MCF 10A (cell line): ENCODE measurements at regions of chr12 and their contacts with region 1.

Region 1: GRCh38 chr12:106302401-106303201 is at the start of gene TCP11L2:
- DNase-seq: peak; percentile 79
- H3K4me3 Mint-ChIP-seq: peak within 1 kb of the TSS; percentile 89
- H3K27ac Mint-ChIP-seq: peak within 1 kb of the TSS; percentile 100
- H3K4me1 Mint-ChIP-seq: peaks cover 23% of the 10 kb centered on the region
- H3K27me3 Mint-ChIP-seq: no peaks in the 10 kb centered on the region
- CTCF ChIP-seq: no peak
- total RNA-seq, gene TCP11L2: 10.2 and 11.4 TPM in 2 replicates

Region 2: DNA sequence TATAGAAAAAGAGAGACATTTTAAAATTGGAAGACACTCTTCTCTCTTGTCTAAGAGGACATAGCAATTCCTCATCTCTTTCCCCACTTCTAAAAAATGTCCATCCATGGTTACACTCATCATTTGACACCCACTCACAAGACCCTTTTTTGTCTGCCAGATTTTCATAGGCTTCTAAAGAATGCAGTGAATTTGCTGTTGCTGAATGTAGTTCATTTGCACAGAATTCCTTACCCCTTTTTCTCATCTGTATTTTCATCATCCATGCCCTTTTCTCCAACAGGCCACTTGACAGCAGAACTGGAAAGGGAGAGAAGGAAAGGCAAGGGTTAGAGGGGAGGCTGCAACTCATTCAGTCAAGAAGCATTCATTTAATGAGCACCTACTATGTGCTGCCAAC is 291.9 kb before region 1 on chr12:
- CTCF ChIA-PET with region 1: no interaction called
- POLR2A ChIA-PET with region 1: no interaction called
- intact Hi-C with region 1: no loop called
- DNase-seq: no peak
- H3K4me3 Mint-ChIP-seq: no peak overlapping the region
- H3K27ac Mint-ChIP-seq: no peak overlapping the region
- H3K4me1 Mint-ChIP-seq: no peaks in the 10 kb centered on the region
- H3K27me3 Mint-ChIP-seq: no peaks in the 10 kb centered on the region
- CTCF ChIP-seq: no peak

Region 3: DNA sequence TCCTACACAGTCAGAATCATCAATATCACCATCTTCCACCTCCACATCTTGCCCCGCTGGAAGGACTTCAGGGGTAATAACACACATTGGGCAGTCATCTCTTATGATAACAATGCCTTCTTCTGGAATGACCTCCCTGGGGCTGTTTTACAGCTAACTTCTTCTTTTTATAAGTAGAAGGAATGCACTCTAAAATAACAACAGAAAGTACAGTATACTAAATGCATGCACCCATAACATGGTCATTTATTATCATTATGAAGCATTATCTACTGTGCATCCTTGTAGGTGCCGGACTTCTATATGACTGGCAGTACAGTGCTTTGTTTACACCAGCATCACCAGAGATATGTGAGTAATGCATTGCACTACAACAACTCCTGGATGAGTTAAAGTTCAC is 144.8 kb before region 1 on chr12:
- CTCF ChIA-PET with region 1: no interaction called
- POLR2A ChIA-PET with region 1: no interaction called
- intact Hi-C with region 1: no loop called
- DNase-seq: no peak
- H3K4me3 Mint-ChIP-seq: no peak overlapping the region
- H3K27ac Mint-ChIP-seq: no peak overlapping the region
- H3K4me1 Mint-ChIP-seq: peaks cover 6% of the 10 kb centered on the region
- H3K27me3 Mint-ChIP-seq: no peaks in the 10 kb centered on the region
- CTCF ChIP-seq: no peak

Region 4: GRCh38 chr12:106247674-106248311 is 54.8 kb before region 1 on chr12 and contains the start of gene CKAP4:
- CTCF ChIA-PET with region 1: interaction called, 3 read pairs
- POLR2A ChIA-PET with region 1: interaction called, 26 read pairs
- intact Hi-C with region 1: no loop called
- DNase-seq: peak; percentile 72
- H3K4me3 Mint-ChIP-seq: peak within 1 kb of the TSS; percentile 76
- H3K27ac Mint-ChIP-seq: peak within 1 kb of the TSS; percentile 23
- H3K4me1 Mint-ChIP-seq: peaks cover 23% of the 10 kb centered on the region
- H3K27me3 Mint-ChIP-seq: no peaks in the 10 kb centered on the region
- CTCF ChIP-seq: no peak
- total RNA-seq, gene CKAP4: 101 and 118 TPM in 2 replicates

Region 5: DNA sequence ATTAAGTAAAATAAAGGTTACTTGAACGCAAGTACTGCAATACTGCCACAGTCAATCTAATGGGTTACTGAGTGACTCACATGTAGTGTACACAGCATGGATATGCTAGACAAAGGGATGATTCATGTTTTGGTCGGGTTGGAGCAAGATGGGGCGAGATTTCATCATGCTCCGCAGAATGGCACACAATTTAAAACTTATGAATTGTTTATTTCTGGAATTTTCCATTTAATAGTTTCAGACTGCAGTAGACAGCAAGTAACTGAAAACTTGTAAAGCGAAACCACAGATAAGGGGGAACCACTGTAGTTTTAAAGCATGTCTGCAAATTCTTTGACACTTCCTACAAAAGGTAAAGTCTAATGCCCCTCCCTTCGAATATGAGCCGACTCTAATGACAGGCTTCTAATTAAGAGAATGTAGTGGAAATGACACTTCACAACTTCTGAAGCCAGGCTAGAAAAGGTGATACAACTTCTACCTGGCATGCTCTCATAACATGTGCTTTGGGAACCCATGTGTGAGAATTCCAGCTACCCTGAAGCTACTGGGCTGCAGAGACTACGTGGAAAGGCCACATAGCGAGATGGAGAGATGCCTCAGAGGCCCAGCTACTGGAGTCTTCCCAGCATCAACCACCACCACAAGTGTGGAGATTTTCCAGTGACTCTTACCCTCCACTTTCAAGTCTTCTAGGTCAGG is 14.0 kb before region 1 on chr12:
- CTCF ChIA-PET with region 1: interaction called, 14 read pairs
- POLR2A ChIA-PET with region 1: interaction called, 52 read pairs
- intact Hi-C with region 1: loop called (anchors 1 kb)
- DNase-seq: peak; percentile 94
- H3K4me3 Mint-ChIP-seq: peak overlapping the region; percentile 21
- H3K27ac Mint-ChIP-seq: peak overlapping the region; percentile 95
- H3K4me1 Mint-ChIP-seq: peaks cover 22% of the 10 kb centered on the region
- H3K27me3 Mint-ChIP-seq: no peaks in the 10 kb centered on the region
- CTCF ChIP-seq: no peak

Region 6: DNA sequence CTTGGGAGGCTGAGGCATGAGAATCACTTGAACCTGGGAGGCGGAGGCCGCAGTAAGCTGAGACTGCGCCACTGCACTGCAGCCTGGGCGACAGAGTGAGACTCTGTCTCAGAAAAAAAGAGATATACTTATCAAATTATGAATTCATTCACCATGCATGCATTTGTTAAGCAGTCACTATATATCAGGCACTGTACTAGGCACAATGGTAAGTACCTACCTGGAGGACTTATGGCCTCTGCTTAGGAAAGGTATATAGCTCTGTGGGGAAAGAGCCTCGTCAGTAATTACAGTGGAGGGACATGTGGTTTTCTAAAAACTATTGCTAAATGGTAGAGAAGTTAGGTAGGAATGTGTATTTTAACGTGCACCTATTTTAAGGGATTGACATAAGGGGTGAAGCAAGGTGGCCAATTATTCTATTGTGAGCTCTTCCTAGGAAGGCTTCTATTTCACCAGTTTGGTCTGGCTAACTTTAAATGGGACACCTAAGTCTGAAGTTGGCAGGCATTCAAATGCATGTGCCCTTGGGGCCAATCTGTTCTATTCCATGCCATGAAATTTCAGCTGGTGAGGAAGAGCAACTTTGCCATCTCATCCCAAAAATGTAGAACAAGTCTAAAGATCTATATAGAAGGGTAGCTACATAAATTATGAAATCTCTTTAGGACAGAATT is 14.9 kb after region 1 on chr12:
- CTCF ChIA-PET with region 1: interaction called, 6 read pairs
- POLR2A ChIA-PET with region 1: interaction called, 62 read pairs
- intact Hi-C with region 1: no loop called
- DNase-seq: peak; percentile 90
- H3K4me3 Mint-ChIP-seq: no peak overlapping the region
- H3K27ac Mint-ChIP-seq: peak overlapping the region; percentile 21
- H3K4me1 Mint-ChIP-seq: peaks cover 13% of the 10 kb centered on the region
- H3K27me3 Mint-ChIP-seq: no peaks in the 10 kb centered on the region
- CTCF ChIP-seq: no peak

Region 7: DNA sequence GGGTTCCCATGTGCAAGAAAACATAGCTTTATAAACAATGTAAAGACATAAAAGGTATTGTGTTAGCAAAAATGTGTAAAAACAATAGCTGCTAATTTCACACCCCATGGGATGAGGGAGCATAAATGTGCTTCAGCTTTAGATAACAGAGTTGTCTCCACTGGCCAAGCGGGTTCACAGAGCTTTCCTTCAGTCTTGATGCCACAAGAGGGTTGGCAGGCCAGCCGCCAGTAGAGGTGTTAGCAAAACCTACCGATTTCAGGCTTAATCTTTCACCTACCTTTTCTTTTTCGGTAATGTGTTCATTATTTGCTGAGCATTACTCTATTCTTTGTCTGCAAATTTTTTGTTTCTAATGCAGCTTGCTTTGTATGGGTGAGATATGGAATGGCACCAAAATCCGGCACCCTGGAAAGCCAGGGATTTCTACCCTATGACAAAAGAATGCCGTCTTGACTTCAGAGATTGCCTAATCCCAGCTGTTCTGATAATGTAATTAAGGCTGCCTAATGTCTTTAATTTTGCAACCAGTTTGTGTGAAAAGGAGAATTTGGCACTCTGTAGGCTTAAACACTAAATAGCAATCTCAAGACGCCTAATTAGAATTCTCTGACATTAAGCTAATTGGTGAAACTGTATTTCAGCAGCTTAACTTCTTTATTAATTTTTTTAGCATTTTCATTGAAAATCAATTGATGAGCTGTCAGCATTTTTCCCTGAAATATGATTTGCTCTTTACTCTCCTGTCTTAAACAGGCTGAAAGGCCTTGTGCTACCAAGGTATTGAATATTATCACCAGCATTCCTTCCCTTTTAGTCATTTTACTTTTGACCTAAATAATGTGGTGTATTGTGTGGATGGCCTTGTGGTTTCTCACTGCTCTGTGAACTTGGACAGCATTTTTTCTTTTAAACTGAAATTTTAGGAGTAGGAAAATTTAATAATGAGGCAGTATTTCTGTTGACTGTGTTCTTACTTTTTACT is 115.6 kb after region 1 on chr12:
- CTCF ChIA-PET with region 1: no interaction called
- POLR2A ChIA-PET with region 1: no interaction called
- intact Hi-C with region 1: no loop called
- DNase-seq: peak; percentile 40
- H3K4me3 Mint-ChIP-seq: no peak overlapping the region
- H3K27ac Mint-ChIP-seq: peak overlapping the region; percentile 54
- H3K4me1 Mint-ChIP-seq: peaks cover 17% of the 10 kb centered on the region
- H3K27me3 Mint-ChIP-seq: no peaks in the 10 kb centered on the region
- CTCF ChIP-seq: no peak